HepG2 (cell line): ENCODE measurements at regions of chr6 and their contacts with region 1.

Region 1: GRCh38 chr6:37257634-37258404 is at the starts of genes TBC1D22B and TMEM217:
- DNase-seq: peak; percentile 94
- ATAC-seq: peak; percentile 100
- H3K4me3 ChIP-seq: peak within 1 kb of the TSS; percentile 94 to 98 (median 97)
- H3K27ac ChIP-seq: peak within 1 kb of the TSS; percentile 79
- H3K4me1 ChIP-seq: peaks cover 59% of the 10 kb centered on the region
- H3K27me3 ChIP-seq: no peaks in the 10 kb centered on the region; a peak in 1 of 5 replicates
- CTCF ChIP-seq: peak; percentile 18; the same call in 1 of the 2 replicates
- EP300 ChIP-seq: no peak
- POLR2A ChIP-seq: peak; percentile 66 to 75; a peak in 3 of 4 replicates
- RAD21 ChIP-seq: peak; percentile 56
- total RNA-seq, gene TBC1D22B: 12.9 and 15.5 TPM in 2 replicates
- total RNA-seq, gene TMEM217: 1.6 and 3.4 TPM in 2 replicates

Region 2: GRCh38 chr6:37222125-37222967 is 35.5 kb before region 1 on chr6:
- CTCF ChIA-PET with region 1: no interaction called
- POLR2A ChIA-PET with region 1: interaction called, 17 read pairs
- in situ Hi-C with region 1: no loop called
- intact Hi-C with region 1: loop called (anchors 1 kb)
- DNase-seq: peak; percentile 91
- ATAC-seq: peak; percentile 96
- H3K4me3 ChIP-seq: peak overlapping the region; percentile 57 to 80 (median 63)
- H3K27ac ChIP-seq: peak overlapping the region; percentile 56
- H3K4me1 ChIP-seq: peaks cover 20% of the 10 kb centered on the region
- H3K27me3 ChIP-seq: no peaks in the 10 kb centered on the region; a peak in 1 of 5 replicates
- CTCF ChIP-seq: peak; percentile 22
- EP300 ChIP-seq: peak in 1 of 2 experiments; percentile 81; a peak in 1 of 4 replicates
- POLR2A ChIP-seq: peak in 1 of 2 experiments; percentile 68; a peak in 3 of 4 replicates
- RAD21 ChIP-seq: no peak

Region 3: GRCh38 chr6:37244430-37245310 is 13.1 kb before region 1 on chr6:
- CTCF ChIA-PET with region 1: no interaction called
- POLR2A ChIA-PET with region 1: interaction called, 54 read pairs
- in situ Hi-C with region 1: no loop called
- intact Hi-C with region 1: no loop called
- DNase-seq: peak; percentile 97
- ATAC-seq: peak; percentile 81
- H3K4me3 ChIP-seq: peak overlapping the region in 2 of 3 experiments; percentile 7 to 8; a peak in 2 of 6 replicates
- H3K27ac ChIP-seq: peak overlapping the region; percentile 69
- H3K4me1 ChIP-seq: peaks cover 50% of the 10 kb centered on the region
- H3K27me3 ChIP-seq: no peaks in the 10 kb centered on the region
- CTCF ChIP-seq: no peak
- EP300 ChIP-seq: peak in 1 of 2 experiments; percentile 48; a peak in 2 of 4 replicates
- POLR2A ChIP-seq: peak in 1 of 2 experiments; percentile 70; a peak in 2 of 4 replicates
- RAD21 ChIP-seq: no peak

Region 4: GRCh38 chr6:37314487-37315156 is 56.8 kb after region 1 on chr6:
- CTCF ChIA-PET with region 1: no interaction called
- POLR2A ChIA-PET with region 1: no interaction called
- in situ Hi-C with region 1: no loop called
- intact Hi-C with region 1: loop called (anchors 2 kb)
- DNase-seq: peak; percentile 48
- ATAC-seq: peak; percentile 91
- H3K4me3 ChIP-seq: no peak overlapping the region
- H3K27ac ChIP-seq: no peak overlapping the region
- H3K4me1 ChIP-seq: no peaks in the 10 kb centered on the region
- H3K27me3 ChIP-seq: no peaks in the 10 kb centered on the region
- CTCF ChIP-seq: peak; percentile 76
- EP300 ChIP-seq: no peak
- POLR2A ChIP-seq: no peak
- RAD21 ChIP-seq: 0 out of 2 replicates have a peak, but pooled peaks have one; percentile 30

Region 5: GRCh38 chr6:38517005-38517404 is 1259.2 kb after region 1 on chr6:
- CTCF ChIA-PET with region 1: no interaction called
- POLR2A ChIA-PET with region 1: no interaction called
- in situ Hi-C with region 1: no loop called
- intact Hi-C with region 1: no loop called
- DNase-seq: peak; percentile 36
- ATAC-seq: peak; percentile 67
- H3K4me3 ChIP-seq: no peak overlapping the region
- H3K27ac ChIP-seq: no peak overlapping the region
- H3K4me1 ChIP-seq: peaks cover 24% of the 10 kb centered on the region
- H3K27me3 ChIP-seq: no peaks in the 10 kb centered on the region; a peak in 1 of 5 replicates
- CTCF ChIP-seq: no peak
- EP300 ChIP-seq: 0 out of 4 replicates have a peak, but pooled peaks of 1 of the 2 experiments have one; percentile 13
- POLR2A ChIP-seq: no peak
- RAD21 ChIP-seq: no peak